T-cell (primary cell): ENCODE measurements at regions of chr1 and their contacts with region 1.

Region 1: DNA sequence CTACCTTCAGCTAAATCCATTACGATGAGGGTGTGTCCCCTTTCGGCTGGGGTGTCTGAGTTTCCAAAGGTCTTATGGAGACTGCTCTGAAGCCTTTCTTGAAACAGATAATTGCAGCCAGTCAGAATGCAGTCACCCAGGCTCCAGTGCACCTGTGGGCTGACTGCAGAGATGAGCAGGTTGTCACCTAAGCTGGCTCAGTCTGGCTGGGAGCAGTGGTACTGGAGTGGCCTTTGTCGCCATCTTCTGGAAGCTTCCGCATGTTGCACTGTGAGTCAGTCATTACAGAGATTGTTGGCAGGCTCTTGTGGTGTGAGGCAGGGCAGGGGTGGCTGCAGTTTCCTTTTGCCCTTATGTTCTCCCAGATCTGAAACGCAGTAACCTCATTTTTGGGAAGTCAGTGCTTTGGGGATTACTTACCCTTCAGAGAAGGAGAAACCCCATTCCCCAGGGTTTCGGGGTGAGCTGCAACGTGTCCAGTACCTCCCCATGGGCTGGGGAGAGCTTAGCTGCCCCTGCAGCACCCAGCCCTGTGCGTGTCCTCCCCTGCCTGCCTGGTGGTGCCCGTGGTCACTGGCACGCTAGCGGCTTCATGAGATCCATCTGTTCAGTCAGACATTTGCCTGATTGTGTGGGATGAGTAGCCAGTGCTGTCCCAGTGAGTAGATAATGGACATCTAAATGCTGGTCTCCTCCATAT is 48.0 kb downstream of the SMYD2 start:
- DNase-seq: peak; percentile 52 to 86 (median 70)
- ATAC-seq: peak; percentile 86 to 96 (median 95)
- H3K4me3 ChIP-seq: no peak overlapping the region
- H3K4me3 Mint-ChIP-seq: no peak overlapping the region
- H3K27ac ChIP-seq: no peak overlapping the region
- H3K27ac Mint-ChIP-seq: peak overlapping the region; percentile 23 to 61
- H3K4me1 ChIP-seq: no peaks in the 10 kb centered on the region
- H3K4me1 Mint-ChIP-seq: peaks cover 0 to 6% (median 4%) of the 10 kb centered on the region in 3 donors
- H3K27me3 ChIP-seq: no peaks in the 10 kb centered on the region
- H3K27me3 Mint-ChIP-seq: no peaks in the 10 kb centered on the region

Region 2: DNA sequence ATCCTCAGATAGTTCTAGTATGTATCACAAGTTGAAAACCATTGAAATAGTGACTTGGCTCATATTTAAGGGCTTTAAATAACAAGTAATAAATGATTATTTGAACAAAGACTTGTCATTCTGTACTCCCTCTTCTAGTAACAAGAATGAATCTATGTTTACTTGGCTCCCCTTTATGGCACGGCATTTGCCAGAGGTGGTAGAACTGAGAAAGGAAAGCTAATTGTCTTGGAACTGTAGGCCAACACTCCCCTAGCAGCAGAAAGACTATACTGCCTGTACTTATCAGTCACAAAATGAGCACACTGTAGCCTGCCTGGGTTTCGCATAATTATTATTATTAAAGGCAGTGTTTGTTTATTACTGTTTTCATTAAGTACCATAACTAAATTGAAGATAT is 77.6 kb before region 1 on chr1:
- CTCF ChIA-PET with region 1: interaction called, 246 to 248 read pairs
- POLR2A ChIA-PET with region 1: no interaction called
- DNase-seq: no peak
- ATAC-seq: no peak
- H3K4me3 ChIP-seq: no peak overlapping the region
- H3K4me3 Mint-ChIP-seq: no peak overlapping the region
- H3K27ac ChIP-seq: no peak overlapping the region
- H3K27ac Mint-ChIP-seq: no peak overlapping the region
- H3K4me1 ChIP-seq: no peaks in the 10 kb centered on the region
- H3K4me1 Mint-ChIP-seq: no peaks in the 10 kb centered on the region
- H3K27me3 ChIP-seq: peaks cover 0 to 4% of the 10 kb centered on the region in 2 experiments
- H3K27me3 Mint-ChIP-seq: peaks cover 19 to 28% of the 10 kb centered on the region in 2 donors

Region 3: DNA sequence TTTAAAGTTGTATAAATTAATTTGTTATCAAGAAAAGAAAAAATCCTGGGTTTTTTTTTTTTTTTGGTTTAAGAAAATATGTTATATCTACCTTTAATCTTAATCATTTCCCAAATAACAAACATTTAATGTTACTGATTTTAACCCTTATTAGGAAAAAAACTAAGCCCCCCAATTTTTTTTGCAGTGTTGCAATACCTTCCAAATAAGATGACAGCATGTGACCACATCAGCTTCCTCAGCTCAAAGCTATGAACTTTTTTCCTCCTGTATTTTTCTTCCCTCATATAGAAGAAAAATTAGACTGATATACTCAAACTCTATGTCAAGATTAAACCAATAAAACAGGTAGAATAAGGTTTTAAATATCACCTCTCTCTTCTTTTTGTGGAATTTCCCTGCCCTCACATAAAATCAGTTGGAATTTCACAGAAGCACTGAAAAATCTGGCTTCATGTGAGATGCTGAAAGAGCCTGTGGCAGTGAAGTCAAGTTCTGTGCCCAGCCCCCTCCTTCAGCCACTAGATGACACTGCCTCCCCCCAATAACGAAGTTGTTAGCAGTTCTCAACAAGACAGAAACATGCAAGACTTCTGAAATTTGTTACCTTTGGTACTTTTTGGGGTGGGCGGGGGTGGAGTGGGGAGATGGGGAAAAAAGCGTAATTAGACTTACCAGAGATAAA is 57.6 kb before region 1 on chr1:
- CTCF ChIA-PET with region 1: interaction called, 7 to 13 read pairs
- POLR2A ChIA-PET with region 1: no interaction called
- DNase-seq: peak in 1 of 35 experiments; percentile 25
- ATAC-seq: no peak
- H3K4me3 ChIP-seq: no peak overlapping the region
- H3K4me3 Mint-ChIP-seq: no peak overlapping the region
- H3K27ac ChIP-seq: no peak overlapping the region
- H3K27ac Mint-ChIP-seq: no peak overlapping the region
- H3K4me1 ChIP-seq: no peaks in the 10 kb centered on the region
- H3K4me1 Mint-ChIP-seq: peaks cover 0 to 4% (median 2%) of the 10 kb centered on the region in 3 donors
- H3K27me3 ChIP-seq: peaks cover 0 to 11% of the 10 kb centered on the region in 2 experiments
- H3K27me3 Mint-ChIP-seq: peaks cover 10 to 13% of the 10 kb centered on the region in 2 donors

Region 4: DNA sequence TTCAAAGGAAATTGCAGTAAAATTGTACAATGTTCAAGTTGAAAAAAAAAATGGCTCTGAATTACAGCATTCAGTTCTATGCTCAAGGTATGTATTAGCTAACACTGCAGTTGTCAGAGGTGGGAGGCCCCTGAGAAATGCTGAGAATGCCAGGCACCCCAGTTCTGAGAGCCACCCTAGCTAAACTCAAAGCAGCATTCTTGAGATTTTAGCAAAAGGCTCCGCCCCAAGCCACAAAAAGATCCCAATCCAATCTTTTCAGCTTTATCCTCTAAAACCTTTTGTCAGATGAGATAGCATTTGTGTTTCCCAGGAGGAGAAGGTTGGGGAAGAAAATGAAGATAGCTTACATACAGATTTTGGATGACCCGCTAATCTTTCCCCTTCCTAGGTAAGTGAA is 20.9 kb after region 1 on chr1:
- CTCF ChIA-PET with region 1: interaction called, 8 to 11 read pairs
- POLR2A ChIA-PET with region 1: interaction called in 1 of 2 experiments, 8 read pairs
- DNase-seq: no peak
- ATAC-seq: no peak
- H3K4me3 ChIP-seq: no peak overlapping the region
- H3K4me3 Mint-ChIP-seq: no peak overlapping the region
- H3K27ac ChIP-seq: no peak overlapping the region
- H3K27ac Mint-ChIP-seq: no peak overlapping the region
- H3K4me1 ChIP-seq: no peaks in the 10 kb centered on the region
- H3K4me1 Mint-ChIP-seq: no peaks in the 10 kb centered on the region
- H3K27me3 ChIP-seq: no peaks in the 10 kb centered on the region
- H3K27me3 Mint-ChIP-seq: no peaks in the 10 kb centered on the region

Region 5: GRCh38 chr1:215526553-215527151 is 1197.7 kb after region 1 on chr1:
- CTCF ChIA-PET with region 1: interaction called, 10 to 16 read pairs
- POLR2A ChIA-PET with region 1: no interaction called
- DNase-seq: peak in 1 of 35 experiments; percentile 65
- ATAC-seq: no peak
- H3K4me3 ChIP-seq: no peak overlapping the region
- H3K4me3 Mint-ChIP-seq: no peak overlapping the region
- H3K27ac ChIP-seq: no peak overlapping the region
- H3K27ac Mint-ChIP-seq: no peak overlapping the region
- H3K4me1 ChIP-seq: no peaks in the 10 kb centered on the region
- H3K4me1 Mint-ChIP-seq: no peaks in the 10 kb centered on the region
- H3K27me3 ChIP-seq: no peaks in the 10 kb centered on the region
- H3K27me3 Mint-ChIP-seq: peaks cover 3 to 24% of the 10 kb centered on the region in 2 donors